ENCODE measurements at regions of chr7 and their contacts with region 1.

Region 1: DNA sequence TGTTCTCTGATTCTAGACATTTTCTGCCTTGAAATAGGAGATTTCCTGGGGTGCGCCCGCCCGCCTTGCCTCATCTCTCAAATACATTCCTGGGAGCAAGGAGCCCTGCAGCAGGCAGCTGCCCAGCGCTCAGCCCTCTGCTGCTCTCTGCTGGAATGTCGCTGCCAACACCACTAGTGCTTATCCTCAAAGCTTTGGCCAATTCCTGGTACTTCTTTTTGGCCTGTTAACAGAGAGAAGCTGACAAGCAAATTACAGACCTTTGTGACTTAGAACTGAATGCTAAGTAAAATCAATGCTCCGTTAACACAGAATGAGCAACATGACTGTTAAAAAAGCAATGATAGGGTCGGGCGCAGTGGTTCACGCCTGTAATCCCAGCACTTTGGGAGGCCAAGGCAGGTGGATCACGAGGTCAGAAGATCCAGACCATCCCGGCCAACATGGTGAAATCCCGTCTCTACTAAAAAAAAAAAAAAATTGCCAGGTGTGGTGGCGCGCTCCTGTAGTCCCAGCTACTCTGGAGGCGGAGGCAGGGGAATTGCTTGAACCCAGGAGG is 41.9 kb upstream of the SYPL1 start:
- DNase-seq: peak; percentile 80
- H3K4me3 ChIP-seq: no peak overlapping the region
- H3K27ac ChIP-seq: no peak overlapping the region
- H3K4me1 ChIP-seq: peaks cover 4% of the 10 kb centered on the region
- H3K27me3 ChIP-seq: peaks cover 31 to 33% of the 10 kb centered on the region in 2 experiments
- CTCF ChIP-seq: peak; percentile 91 to 92
- POLR2A ChIP-seq: no peak

Region 2: DNA sequence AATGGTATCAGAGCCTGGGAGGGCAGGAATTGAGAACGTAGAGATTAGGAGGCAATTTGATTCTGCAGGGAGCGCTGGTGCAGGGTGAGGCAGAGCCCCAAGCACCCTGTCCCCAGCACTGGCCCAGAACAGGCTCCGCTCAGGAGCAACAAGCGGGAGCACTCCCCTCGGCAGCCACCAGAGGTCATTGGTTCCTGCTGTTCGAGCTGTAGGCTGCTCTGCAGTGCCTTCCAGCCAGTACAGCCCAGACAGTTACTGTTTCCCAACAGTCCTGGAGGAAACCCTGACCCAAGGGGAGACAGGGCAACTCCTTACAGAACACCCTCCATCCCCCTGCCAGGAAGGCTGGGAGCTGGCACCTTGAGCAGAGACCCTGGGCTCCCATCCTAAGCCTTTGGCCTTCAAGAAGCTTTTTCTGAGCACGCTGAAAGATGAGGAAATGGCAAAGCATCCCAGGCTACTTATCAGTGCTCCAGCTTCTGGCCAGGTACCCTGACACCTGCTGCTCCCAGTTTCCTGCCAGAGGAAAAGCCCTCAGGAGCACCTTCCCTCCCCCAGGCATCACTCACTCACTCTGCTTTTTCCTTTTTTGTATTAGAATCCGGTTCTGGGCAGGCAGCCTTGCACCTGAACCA is 501.5 kb before region 1 on chr7:
- CTCF ChIA-PET with region 1: interaction called, 7 read pairs
- POLR2A ChIA-PET with region 1: no interaction called
- dilution Hi-C with region 1: no loop called
- intact Hi-C with region 1: loop called (anchors 5 kb)
- DNase-seq: peak; percentile 67
- H3K4me3 ChIP-seq: no peak overlapping the region
- H3K27ac ChIP-seq: no peak overlapping the region
- H3K4me1 ChIP-seq: no peaks in the 10 kb centered on the region
- H3K27me3 ChIP-seq: no peaks in the 10 kb centered on the region
- CTCF ChIP-seq: peak; percentile 74 to 91
- POLR2A ChIP-seq: no peak

Region 3: GRCh38 chr7:106041140-106041717 is 112.7 kb before region 1 on chr7:
- CTCF ChIA-PET with region 1: interaction called, 15 read pairs
- POLR2A ChIA-PET with region 1: no interaction called
- dilution Hi-C with region 1: no loop called
- intact Hi-C with region 1: no loop called
- DNase-seq: peak; percentile 35
- H3K4me3 ChIP-seq: no peak overlapping the region
- H3K27ac ChIP-seq: no peak overlapping the region
- H3K4me1 ChIP-seq: no peaks in the 10 kb centered on the region
- H3K27me3 ChIP-seq: peaks cover 4 to 8% of the 10 kb centered on the region in 2 experiments
- CTCF ChIP-seq: peak; percentile 79 to 89
- POLR2A ChIP-seq: no peak

Region 4: GRCh38 chr7:106056513-106057203 is 97.3 kb before region 1 on chr7:
- CTCF ChIA-PET with region 1: interaction called, 209 read pairs
- POLR2A ChIA-PET with region 1: no interaction called
- dilution Hi-C with region 1: loop called (anchors 25 kb)
- intact Hi-C with region 1: loop called (anchors 1 kb)
- DNase-seq: peak; percentile 70
- H3K4me3 ChIP-seq: no peak overlapping the region
- H3K27ac ChIP-seq: no peak overlapping the region
- H3K4me1 ChIP-seq: no peaks in the 10 kb centered on the region
- H3K27me3 ChIP-seq: peaks cover 5 to 10% of the 10 kb centered on the region in 2 experiments
- CTCF ChIP-seq: peak; percentile 76 to 90
- POLR2A ChIP-seq: no peak

Region 5: GRCh38 chr7:106071356-106071998 is 82.5 kb before region 1 on chr7:
- CTCF ChIA-PET with region 1: interaction called, 25 read pairs
- POLR2A ChIA-PET with region 1: no interaction called
- dilution Hi-C with region 1: loop called (anchors 25 kb)
- intact Hi-C with region 1: no loop called
- DNase-seq: peak; percentile 79
- H3K4me3 ChIP-seq: no peak overlapping the region
- H3K27ac ChIP-seq: peak overlapping the region; percentile 60
- H3K4me1 ChIP-seq: peaks cover 20% of the 10 kb centered on the region
- H3K27me3 ChIP-seq: no peaks in the 10 kb centered on the region
- CTCF ChIP-seq: no peak
- POLR2A ChIP-seq: no peak

Region 6: DNA sequence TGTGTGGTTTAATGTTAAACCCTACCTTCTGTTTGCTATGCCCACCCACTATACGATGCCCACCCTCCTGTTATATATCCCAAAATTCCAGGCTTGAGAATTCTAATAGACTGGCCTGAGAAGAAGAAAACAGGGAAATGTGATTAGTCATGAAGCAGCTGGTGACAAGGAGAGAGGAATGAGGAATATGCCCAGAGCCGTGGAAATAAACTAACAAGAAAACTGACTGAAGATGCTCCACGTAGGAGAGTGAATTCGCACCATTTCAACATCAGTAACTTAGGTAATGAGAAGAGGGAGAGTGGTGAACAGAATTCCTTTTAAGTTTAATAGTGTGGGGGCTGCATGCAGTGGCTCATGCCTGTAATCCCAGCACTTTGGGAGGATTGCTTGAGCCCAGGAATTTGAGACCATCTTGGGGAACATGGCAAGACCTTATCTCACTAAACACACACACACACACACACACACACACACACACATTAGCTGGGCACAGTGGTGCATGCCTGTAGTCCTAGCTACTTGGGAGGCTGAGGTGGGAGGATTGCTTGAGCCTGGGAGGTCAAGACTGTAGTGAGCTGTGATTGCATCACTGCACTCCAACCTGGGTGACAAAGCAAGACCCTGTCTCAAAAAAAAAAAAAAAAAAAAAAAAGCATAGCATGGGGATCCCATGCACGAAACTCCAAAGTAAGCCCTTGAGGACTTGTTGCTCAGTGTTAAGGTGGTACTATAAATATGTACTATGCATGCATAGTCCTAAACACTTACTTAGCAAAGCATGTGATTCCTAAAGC is 25.8 kb before region 1 on chr7:
- CTCF ChIA-PET with region 1: interaction called, 17 read pairs
- POLR2A ChIA-PET with region 1: no interaction called
- dilution Hi-C with region 1: no loop called
- intact Hi-C with region 1: no loop called
- DNase-seq: no peak
- H3K4me3 ChIP-seq: no peak overlapping the region
- H3K27ac ChIP-seq: no peak overlapping the region
- H3K4me1 ChIP-seq: peaks cover 8% of the 10 kb centered on the region
- H3K27me3 ChIP-seq: peaks cover 7 to 23% of the 10 kb centered on the region in 2 experiments
- CTCF ChIP-seq: no peak
- POLR2A ChIP-seq: no peak

Region 7: GRCh38 chr7:106166655-106167342 is 12.8 kb after region 1 on chr7:
- CTCF ChIA-PET with region 1: interaction called, 28 read pairs
- POLR2A ChIA-PET with region 1: no interaction called
- dilution Hi-C with region 1: no loop called
- intact Hi-C with region 1: no loop called
- DNase-seq: peak; percentile 69
- H3K4me3 ChIP-seq: no peak overlapping the region
- H3K27ac ChIP-seq: no peak overlapping the region
- H3K4me1 ChIP-seq: no peaks in the 10 kb centered on the region
- H3K27me3 ChIP-seq: no peaks in the 10 kb centered on the region
- CTCF ChIP-seq: peak; percentile 63 to 70
- POLR2A ChIP-seq: no peak